ENCODE measurements at regions of chr16 and their contacts with region 1.

Region 1: GRCh38 chr16:10918294-10919002 is 23.8 kb downstream of the DEXI start:
- DNase-seq: peak; percentile 82 to 92
- ATAC-seq: peak; percentile 87 to 95
- H3K4me3 ChIP-seq: no peak overlapping the region
- H3K27ac ChIP-seq: no peak overlapping the region
- H3K4me1 ChIP-seq: no peaks in the 10 kb centered on the region
- CTCF ChIP-seq: peak; percentile 80
- EP300 ChIP-seq: no peak
- POLR2A ChIP-seq: no peak
- RAD21 ChIP-seq: peak; percentile 85 to 88

Region 2: DNA sequence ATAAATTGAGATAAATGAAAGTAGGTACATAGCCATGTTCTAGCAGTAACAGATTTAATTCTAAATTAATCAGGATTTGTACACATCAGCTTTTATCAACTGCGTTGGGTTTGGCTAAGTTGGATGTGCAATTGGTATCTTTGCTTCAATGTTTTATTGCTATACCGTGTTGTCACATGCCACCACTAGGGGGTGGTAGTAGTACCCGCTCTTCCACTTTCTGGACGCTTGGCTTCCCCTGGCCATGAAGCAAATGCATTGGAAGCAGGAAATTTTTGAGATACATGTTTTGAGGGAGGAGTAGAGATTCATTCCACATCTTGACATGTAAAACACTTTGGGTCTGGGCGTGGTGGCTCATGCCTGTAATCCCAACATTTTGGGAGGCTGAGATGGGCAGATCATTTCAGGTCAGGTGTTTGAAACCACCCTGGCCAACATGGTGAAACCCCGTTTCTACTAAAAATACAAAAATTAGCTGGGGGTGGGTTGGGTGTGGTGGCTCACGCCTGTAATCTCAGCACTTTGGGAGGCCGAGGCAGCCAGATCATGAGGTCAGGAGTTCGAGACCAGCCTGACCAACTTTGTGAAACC is 396.7 kb before region 1 on chr16:
- CTCF ChIA-PET with region 1: interaction called, 13 read pairs
- POLR2A ChIA-PET with region 1: no interaction called
- DNase-seq: peak; percentile 45 to 69
- ATAC-seq: peak; percentile 47 to 83; a peak in 3 of 6 replicates
- H3K4me3 ChIP-seq: no peak overlapping the region
- H3K27ac ChIP-seq: peak overlapping the region in 1 of 2 experiments; percentile 80; a peak in 1 of 6 replicates
- H3K4me1 ChIP-seq: peaks cover 14% of the 10 kb centered on the region
- CTCF ChIP-seq: peak; percentile 67
- EP300 ChIP-seq: no peak
- POLR2A ChIP-seq: no peak
- RAD21 ChIP-seq: peak; percentile 52 to 72

Region 3: GRCh38 chr16:10743610-10744393 is 174.6 kb before region 1 on chr16 and contains the start of gene NUBP1:
- CTCF ChIA-PET with region 1: interaction called, 8 read pairs
- POLR2A ChIA-PET with region 1: interaction called, 13 read pairs
- DNase-seq: peak; percentile 93 to 99
- ATAC-seq: peak; percentile 96
- H3K4me3 ChIP-seq: peak within 1 kb of the TSS; percentile 46
- H3K27ac ChIP-seq: peak within 1 kb of the TSS; percentile 89 to 95
- H3K4me1 ChIP-seq: peaks cover 17% of the 10 kb centered on the region; the same call in 2 of the 3 replicates
- CTCF ChIP-seq: no peak
- EP300 ChIP-seq: no peak
- POLR2A ChIP-seq: peak; percentile 72
- RAD21 ChIP-seq: no peak
- polyA plus RNA-seq, gene NUBP1: 33.9 and 34.1 TPM in 2 replicates

Region 4: DNA sequence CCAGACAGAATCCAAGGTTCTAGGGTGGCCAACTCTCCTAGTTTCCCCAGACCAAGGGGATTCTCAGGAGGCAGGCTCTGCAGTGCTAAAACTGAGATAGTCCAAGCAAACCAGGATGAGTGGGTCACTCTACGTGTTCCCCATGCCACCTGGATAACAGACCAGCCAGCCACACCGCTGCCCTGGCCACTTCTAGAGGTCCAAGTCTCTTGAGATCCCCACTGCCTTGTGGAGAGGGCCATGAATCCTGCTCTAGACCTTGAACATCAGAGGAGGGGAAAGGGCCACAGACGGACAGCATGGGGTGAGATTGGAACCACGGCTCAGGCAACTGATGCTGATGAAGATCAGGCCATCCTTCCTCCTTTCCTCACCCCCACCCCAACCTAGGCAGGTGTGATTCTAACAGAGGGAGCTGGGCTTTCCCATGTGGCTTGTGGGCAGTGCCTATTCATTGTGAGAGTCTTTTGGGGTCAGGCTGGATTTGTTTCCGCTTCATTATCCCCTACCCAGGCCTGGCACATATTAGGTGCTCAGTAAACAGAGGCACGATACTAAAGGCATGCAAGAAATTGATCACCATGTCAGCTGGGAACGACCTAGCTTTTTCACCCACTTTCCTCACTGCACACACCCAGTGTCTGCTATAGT is 83.0 kb before region 1 on chr16:
- CTCF ChIA-PET with region 1: no interaction called
- POLR2A ChIA-PET with region 1: no interaction called
- DNase-seq: no peak
- ATAC-seq: no peak
- H3K4me3 ChIP-seq: no peak overlapping the region
- H3K27ac ChIP-seq: no peak overlapping the region
- H3K4me1 ChIP-seq: no peaks in the 10 kb centered on the region
- CTCF ChIP-seq: no peak
- EP300 ChIP-seq: no peak
- POLR2A ChIP-seq: no peak
- RAD21 ChIP-seq: no peak

Region 5: GRCh38 chr16:10906914-10907756 is 11.3 kb before region 1 on chr16:
- CTCF ChIA-PET with region 1: interaction called, 53 read pairs
- POLR2A ChIA-PET with region 1: no interaction called
- DNase-seq: no peak
- ATAC-seq: peak; percentile 27 to 33; a peak in 4 of 6 replicates
- H3K4me3 ChIP-seq: no peak overlapping the region
- H3K27ac ChIP-seq: no peak overlapping the region
- H3K4me1 ChIP-seq: no peaks in the 10 kb centered on the region
- CTCF ChIP-seq: no peak
- EP300 ChIP-seq: no peak
- POLR2A ChIP-seq: no peak
- RAD21 ChIP-seq: no peak

Region 6: DNA sequence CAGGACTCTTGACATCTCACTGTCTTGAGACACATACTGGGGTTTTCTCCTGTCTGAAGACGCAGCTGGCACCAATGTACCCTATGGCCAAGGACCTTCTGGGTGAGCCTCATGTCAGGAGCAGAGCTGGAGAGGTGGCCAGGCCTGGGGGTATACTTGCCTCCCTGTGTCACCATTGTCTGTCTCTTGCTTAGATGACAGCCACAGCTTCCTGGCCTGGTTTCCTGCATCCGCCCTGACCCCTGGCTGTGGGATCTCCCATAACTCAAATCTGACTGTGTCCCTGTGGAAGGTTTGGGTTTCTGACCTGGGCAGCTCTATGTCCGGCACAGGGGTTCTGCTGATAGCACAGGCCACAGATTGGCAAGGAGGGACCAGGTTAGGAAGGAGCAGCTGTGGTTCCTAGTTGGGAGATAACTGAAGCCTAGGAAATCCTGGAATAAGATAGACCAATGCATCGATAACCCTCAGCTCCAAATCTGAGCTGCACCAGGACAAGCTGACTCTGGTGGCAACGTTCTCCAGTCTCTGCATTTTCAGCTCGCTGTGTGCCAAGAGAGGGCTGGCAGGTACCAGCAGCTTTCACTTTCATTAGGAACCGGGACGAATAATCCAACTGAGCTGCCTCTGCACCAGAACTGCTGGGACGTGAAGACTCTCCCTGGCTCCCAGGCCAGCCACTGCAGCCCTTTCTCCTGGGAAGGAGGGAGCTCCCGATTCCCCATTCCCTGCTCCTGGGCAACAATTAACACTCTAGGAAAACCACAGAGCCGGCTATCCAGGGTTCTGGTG is 18.8 kb after region 1 on chr16:
- CTCF ChIA-PET with region 1: interaction called, 11 read pairs
- POLR2A ChIA-PET with region 1: no interaction called
- DNase-seq: no peak
- ATAC-seq: no peak
- H3K4me3 ChIP-seq: no peak overlapping the region
- H3K27ac ChIP-seq: no peak overlapping the region
- H3K4me1 ChIP-seq: peaks cover 14% of the 10 kb centered on the region
- CTCF ChIP-seq: no peak
- EP300 ChIP-seq: no peak
- POLR2A ChIP-seq: no peak
- RAD21 ChIP-seq: no peak

Region 7: DNA sequence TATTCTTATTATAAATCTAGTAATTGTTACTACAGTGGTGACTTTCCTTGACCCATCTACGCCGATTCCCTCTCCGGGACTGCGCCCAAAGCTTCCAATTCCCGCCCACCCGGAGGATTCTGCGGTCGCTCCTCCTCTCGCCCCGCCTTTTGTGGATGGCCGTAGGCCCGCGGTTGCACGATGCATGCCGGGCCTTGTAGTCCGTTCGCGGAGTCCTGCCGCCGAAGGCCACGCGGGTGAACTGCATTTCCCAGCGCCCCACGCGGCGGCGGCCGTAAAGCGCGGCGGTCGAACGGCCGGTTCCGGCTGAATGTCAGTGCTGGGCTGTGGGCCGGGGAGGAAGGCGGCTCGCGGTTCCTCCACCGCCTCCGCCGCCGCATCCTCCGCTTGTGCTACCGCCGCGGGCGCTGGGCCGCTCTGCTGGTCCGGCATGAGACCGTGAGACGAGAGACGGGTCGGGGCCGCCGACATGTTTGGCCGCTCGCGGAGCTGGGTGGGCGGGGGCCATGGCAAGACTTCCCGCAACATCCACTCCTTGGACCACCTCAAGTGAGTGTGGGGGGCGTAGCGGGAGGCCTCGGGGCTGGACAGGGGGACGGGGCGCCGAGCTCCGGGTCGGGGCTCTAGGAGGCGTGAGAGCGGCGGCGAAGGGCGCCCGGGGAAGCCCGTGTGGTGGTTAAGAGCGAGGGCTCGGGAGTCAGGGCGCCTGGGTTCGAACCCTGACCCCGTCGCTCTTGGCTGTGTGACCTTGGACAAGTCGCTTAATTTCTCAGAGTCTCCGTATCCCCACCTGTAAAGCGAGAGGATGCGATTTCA is 26.0 kb after region 1 on chr16 and contains the start of gene CLEC16A:
- CTCF ChIA-PET with region 1: interaction called, 11 read pairs
- POLR2A ChIA-PET with region 1: no interaction called
- DNase-seq: peak; percentile 94 to 97
- ATAC-seq: peak; percentile 72 to 91
- H3K4me3 ChIP-seq: peak within 1 kb of the TSS; percentile 87
- H3K27ac ChIP-seq: peak within 1 kb of the TSS; percentile 80 to 90
- H3K4me1 ChIP-seq: peaks cover 36% of the 10 kb centered on the region
- CTCF ChIP-seq: no peak
- EP300 ChIP-seq: no peak
- POLR2A ChIP-seq: peak; percentile 82
- RAD21 ChIP-seq: no peak
- polyA plus RNA-seq, gene CLEC16A: 10.4 and 10.6 TPM in 2 replicates

Measured in A549 (cell line).